Caco-2 (cell line): ENCODE measurements at regions of chr17 and their contacts with region 1.

Region 1: DNA sequence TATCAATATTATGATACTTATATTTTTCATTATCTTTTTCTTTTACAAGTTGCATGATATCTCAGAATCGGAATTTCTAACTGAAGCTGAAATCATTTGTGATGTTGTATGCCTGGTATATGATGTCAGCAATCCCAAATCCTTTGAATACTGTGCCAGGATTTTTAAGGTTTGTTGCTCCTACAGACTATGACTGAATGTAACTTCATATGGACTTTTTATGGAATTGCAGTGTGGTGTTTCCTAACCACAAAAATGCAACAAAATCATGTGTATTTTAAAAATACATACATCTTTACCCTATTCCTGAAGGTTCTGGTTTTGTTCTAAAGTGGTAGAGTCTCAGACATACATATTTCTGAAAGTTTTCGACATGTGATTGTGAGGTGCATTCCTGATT is 58.8 kb upstream of the RHBDL3 start:
- DNase-seq: no peak
- H3K4me3 ChIP-seq: no peak overlapping the region
- H3K4me3 Mint-ChIP-seq: no peak overlapping the region
- H3K27ac Mint-ChIP-seq: peak overlapping the region; percentile 91
- H3K4me1 ChIP-seq: peaks cover 16% of the 10 kb centered on the region
- H3K4me1 Mint-ChIP-seq: peaks cover 14% of the 10 kb centered on the region
- H3K27me3 ChIP-seq: no peaks in the 10 kb centered on the region
- H3K27me3 Mint-ChIP-seq: no peaks in the 10 kb centered on the region
- CTCF ChIP-seq: no peak

Region 2: DNA sequence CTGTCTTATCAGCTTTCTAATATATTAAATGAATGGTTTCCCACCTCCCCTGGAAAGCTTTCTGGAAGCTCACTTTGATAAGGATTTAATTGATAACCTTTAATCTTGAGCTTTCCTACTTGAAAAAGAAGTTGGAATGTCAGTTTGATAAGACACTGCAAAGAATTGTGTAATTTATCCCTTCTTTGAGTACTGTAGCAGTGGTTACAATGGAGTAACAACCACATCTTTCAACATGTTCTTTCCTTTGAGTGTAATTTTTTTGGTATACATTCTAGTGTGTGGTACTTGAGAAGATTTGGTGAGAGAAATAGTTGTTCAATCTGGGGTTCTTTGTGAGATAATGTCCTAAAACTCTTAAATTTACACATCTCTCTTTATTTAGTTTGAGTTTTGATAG is 1784.7 kb before region 1 on chr17:
- CTCF ChIA-PET with region 1: no interaction called
- POLR2A ChIA-PET with region 1: interaction called, 13 read pairs
- intact Hi-C with region 1: no loop called
- DNase-seq: no peak
- H3K4me3 ChIP-seq: no peak overlapping the region
- H3K4me3 Mint-ChIP-seq: no peak overlapping the region
- H3K27ac Mint-ChIP-seq: peak overlapping the region; percentile 25
- H3K4me1 ChIP-seq: peaks cover 19% of the 10 kb centered on the region
- H3K4me1 Mint-ChIP-seq: peaks cover 19% of the 10 kb centered on the region
- H3K27me3 ChIP-seq: no peaks in the 10 kb centered on the region
- H3K27me3 Mint-ChIP-seq: no peaks in the 10 kb centered on the region
- CTCF ChIP-seq: no peak

Region 3: GRCh38 chr17:32142038-32142856 is 64.6 kb before region 1 on chr17 and contains the start of gene RHOT1:
- CTCF ChIA-PET with region 1: interaction called, 4 read pairs
- POLR2A ChIA-PET with region 1: no interaction called
- intact Hi-C with region 1: loop called (anchors 10 kb)
- DNase-seq: peak; percentile 84 to 89
- H3K4me3 ChIP-seq: peak within 1 kb of the TSS; percentile 90
- H3K4me3 Mint-ChIP-seq: peak within 1 kb of the TSS; percentile 99
- H3K27ac Mint-ChIP-seq: peak within 1 kb of the TSS; percentile 97
- H3K4me1 ChIP-seq: peaks cover 6% of the 10 kb centered on the region; the same call in 1 of the 2 replicates
- H3K4me1 Mint-ChIP-seq: no peaks in the 10 kb centered on the region
- H3K27me3 ChIP-seq: no peaks in the 10 kb centered on the region
- H3K27me3 Mint-ChIP-seq: no peaks in the 10 kb centered on the region
- CTCF ChIP-seq: peak; percentile 61 to 67
- total RNA-seq, gene RHOT1: 31.8 and 33.3 TPM in 2 replicates

Region 4: DNA sequence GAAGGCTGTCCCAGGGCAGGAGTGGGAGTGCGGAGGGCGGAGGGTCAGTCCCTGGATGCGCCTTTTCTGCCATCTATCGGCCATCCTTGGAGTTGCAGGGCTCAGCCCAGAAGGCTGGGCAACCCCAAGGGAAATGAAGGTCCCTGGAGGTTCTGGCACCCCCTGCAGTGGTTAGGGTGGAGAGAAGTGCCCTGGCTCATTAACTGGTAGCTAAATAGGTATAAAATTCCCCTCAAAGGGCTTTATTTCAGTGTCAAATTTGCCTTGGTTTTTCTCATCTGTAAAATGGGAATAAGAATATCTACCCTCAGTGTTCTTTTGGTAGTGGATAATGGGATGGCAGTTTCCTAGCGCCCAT is 112.7 kb after region 1 on chr17:
- CTCF ChIA-PET with region 1: no interaction called
- POLR2A ChIA-PET with region 1: no interaction called
- intact Hi-C with region 1: loop called (anchors 1 kb)
- DNase-seq: peak; percentile 78 to 90
- H3K4me3 ChIP-seq: no peak overlapping the region
- H3K4me3 Mint-ChIP-seq: no peak overlapping the region
- H3K27ac Mint-ChIP-seq: no peak overlapping the region
- H3K4me1 ChIP-seq: no peaks in the 10 kb centered on the region
- H3K4me1 Mint-ChIP-seq: peaks cover 8% of the 10 kb centered on the region
- H3K27me3 ChIP-seq: no peaks in the 10 kb centered on the region
- H3K27me3 Mint-ChIP-seq: peaks cover 2% of the 10 kb centered on the region
- CTCF ChIP-seq: peak; percentile 98 to 99

Region 5: DNA sequence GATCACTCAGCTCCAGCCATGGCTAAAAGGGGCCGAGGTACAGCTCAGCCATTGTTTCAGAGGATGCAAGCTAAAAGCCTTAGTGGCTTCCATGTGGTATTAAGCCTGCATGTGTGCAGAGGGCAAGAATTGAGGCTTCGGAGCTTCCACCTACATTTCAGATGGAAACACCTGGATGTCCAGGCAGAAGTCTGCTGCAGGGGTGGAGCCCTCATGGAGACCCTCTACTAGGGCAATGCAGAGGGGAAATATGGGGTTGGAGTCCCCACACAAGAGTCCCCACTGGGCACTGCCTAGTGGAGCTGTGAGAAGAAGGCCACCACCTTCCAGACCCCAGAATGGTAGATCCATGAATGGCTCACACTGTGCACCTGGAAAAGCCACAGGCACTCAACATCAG is 222.7 kb after region 1 on chr17:
- CTCF ChIA-PET with region 1: interaction called, 12 read pairs
- POLR2A ChIA-PET with region 1: no interaction called
- intact Hi-C with region 1: no loop called
- DNase-seq: peak in 1 of 2 experiments; percentile 15
- H3K4me3 ChIP-seq: no peak overlapping the region
- H3K4me3 Mint-ChIP-seq: no peak overlapping the region
- H3K27ac Mint-ChIP-seq: no peak overlapping the region
- H3K4me1 ChIP-seq: no peaks in the 10 kb centered on the region
- H3K4me1 Mint-ChIP-seq: no peaks in the 10 kb centered on the region
- H3K27me3 ChIP-seq: no peaks in the 10 kb centered on the region
- H3K27me3 Mint-ChIP-seq: no peaks in the 10 kb centered on the region
- CTCF ChIP-seq: no peak

Region 6: DNA sequence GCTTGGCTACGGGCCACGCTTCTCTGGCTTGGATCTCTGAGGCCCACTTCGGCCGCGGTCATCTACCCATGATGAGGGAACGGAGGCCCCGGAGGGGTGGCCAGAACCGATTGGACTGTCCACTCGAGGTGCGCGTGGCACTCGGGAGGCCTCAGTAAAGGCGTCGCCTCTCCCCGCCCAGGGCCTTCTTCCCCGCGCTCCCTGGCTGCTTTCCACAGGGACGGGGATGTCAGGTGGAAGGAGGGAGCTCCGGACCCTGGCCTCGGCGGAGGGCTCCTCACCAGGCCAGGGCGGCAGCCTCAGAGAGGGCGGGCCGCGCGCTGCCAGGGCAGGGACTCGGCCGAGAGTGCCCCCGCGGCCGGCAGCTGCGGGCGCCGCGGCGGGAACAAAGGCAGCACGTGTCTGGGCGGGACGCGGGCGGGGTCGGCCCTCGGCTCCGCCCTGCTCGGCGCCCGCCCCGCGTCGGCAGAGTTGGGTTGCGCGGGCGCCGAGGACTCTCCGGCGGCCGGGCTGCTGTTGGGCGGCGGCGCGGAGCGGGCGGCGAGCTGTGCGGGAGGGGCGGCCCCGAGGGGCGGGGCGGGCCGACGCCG is 279.3 kb after region 1 on chr17:
- CTCF ChIA-PET with region 1: no interaction called
- POLR2A ChIA-PET with region 1: interaction called, 13 read pairs
- intact Hi-C with region 1: no loop called
- DNase-seq: peak; percentile 78 to 88
- H3K4me3 ChIP-seq: peak overlapping the region; percentile 77
- H3K4me3 Mint-ChIP-seq: peak overlapping the region; percentile 88
- H3K27ac Mint-ChIP-seq: peak overlapping the region; percentile 89
- H3K4me1 ChIP-seq: peaks cover 18% of the 10 kb centered on the region
- H3K4me1 Mint-ChIP-seq: peaks cover 24% of the 10 kb centered on the region
- H3K27me3 ChIP-seq: no peaks in the 10 kb centered on the region
- H3K27me3 Mint-ChIP-seq: no peaks in the 10 kb centered on the region
- CTCF ChIP-seq: no peak